ENCODE measurements at regions of chr18 and their contacts with region 1.

Region 1: DNA sequence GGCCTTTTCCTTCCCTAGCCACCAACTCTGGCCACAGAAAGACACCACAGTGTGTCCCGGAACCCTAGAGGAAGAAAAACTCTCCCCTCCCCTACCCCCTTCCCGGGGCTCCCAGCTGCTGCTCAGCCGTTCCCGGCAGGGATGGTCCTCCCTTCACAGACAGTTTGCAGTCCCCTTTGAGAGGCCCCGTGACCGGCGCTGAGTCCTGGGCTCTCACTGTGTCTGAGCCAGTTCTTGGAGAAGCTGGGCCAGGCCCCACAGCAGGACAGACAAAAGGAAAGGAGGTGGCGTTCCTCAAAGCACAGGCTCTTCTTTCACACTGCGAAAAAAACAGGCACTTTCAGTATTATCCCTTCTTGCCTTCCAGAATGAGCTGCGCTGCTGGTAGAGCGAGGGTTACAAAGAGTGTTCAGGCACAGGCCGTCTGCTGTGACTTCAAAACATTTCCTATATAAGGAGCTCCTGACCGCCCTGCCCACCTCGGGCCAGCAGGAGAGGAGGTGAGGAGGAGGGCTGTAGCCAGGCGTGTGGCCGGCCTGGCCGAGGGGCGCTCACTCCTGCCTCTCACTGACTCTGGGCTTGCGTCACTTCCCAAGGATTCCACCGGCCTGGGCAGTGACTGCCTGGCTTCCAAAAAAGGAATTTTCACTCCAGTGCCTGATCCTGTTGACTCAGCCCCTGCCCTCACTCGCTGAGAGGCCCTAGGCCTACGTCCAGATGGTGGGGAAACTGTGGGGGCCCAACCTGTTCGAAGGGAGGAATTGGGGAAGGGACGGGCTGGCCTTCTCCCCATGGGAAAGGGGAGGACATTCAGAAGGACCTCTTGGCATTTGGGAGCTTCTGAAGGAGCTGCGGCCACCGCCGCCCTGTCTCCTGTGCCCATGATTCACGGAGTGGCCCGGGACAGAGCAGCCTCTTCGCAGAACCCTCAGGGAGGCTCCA is 24.9 kb downstream of the CIDEA start:
- DNase-seq: peak; percentile 93
- H3K4me3 ChIP-seq: peak overlapping the region; percentile 9 to 44 (median 30)
- H3K27ac ChIP-seq: peak overlapping the region; percentile 89
- H3K4me1 ChIP-seq: peaks cover 34% of the 10 kb centered on the region
- H3K27me3 ChIP-seq: no peaks in the 10 kb centered on the region
- CTCF ChIP-seq: peak in 1 of 2 donors; percentile 23
- POLR2A ChIP-seq: peak; percentile 86

Region 2: DNA sequence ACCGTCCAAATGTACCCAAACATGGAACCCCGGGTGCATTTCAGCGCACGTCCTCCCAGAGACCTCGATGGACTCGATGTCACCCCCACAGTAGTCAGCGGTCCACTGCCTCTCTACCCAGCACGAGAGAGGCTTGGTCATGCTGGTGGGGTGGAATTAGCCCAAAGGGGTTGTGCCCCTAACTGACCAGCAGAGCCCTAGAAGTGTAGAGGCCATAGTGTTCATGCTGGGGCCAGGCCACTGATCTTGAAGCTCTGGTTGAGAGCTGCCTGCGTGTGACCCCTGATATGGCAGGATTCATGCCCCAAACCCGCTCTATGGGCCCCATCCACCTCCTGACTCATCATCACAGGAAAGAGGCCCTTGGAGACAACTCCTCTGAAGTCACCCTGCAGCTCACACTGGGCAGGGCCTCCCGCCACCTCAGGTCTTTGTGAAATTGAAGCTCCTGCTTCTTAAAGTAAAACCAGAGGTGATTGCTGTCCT is 16.9 kb after region 1 on chr18:
- CTCF ChIA-PET with region 1: interaction called, 33 read pairs
- POLR2A ChIA-PET with region 1: interaction called, 12 read pairs
- dilution Hi-C with region 1: no loop called
- intact Hi-C with region 1: loop called (anchors 1 kb)
- DNase-seq: no peak
- H3K4me3 ChIP-seq: no peak overlapping the region
- H3K27ac ChIP-seq: peak overlapping the region; percentile 85
- H3K4me1 ChIP-seq: peaks cover 14% of the 10 kb centered on the region
- H3K27me3 ChIP-seq: no peaks in the 10 kb centered on the region
- CTCF ChIP-seq: no peak
- POLR2A ChIP-seq: peak; percentile 42

Region 3: GRCh38 chr18:12376718-12377555 is 97.9 kb after region 1 on chr18 and contains the start of gene AFG3L2:
- CTCF ChIA-PET with region 1: no interaction called
- POLR2A ChIA-PET with region 1: no interaction called
- dilution Hi-C with region 1: no loop called
- intact Hi-C with region 1: loop called (anchors 1 kb)
- DNase-seq: peak; percentile 100
- H3K4me3 ChIP-seq: peak within 1 kb of the TSS; percentile 62 to 85 (median 72)
- H3K27ac ChIP-seq: peak within 1 kb of the TSS; percentile 89
- H3K4me1 ChIP-seq: peaks cover 9% of the 10 kb centered on the region
- H3K27me3 ChIP-seq: no peaks in the 10 kb centered on the region
- CTCF ChIP-seq: no peak
- POLR2A ChIP-seq: peak; percentile 93
- total RNA-seq, gene AFG3L2: 40.6 and 42.4 TPM in 2 replicates

Region 4: GRCh38 chr18:12883684-12884405 is 604.8 kb after region 1 on chr18 and contains the start of gene PTPN2:
- CTCF ChIA-PET with region 1: no interaction called
- POLR2A ChIA-PET with region 1: no interaction called
- dilution Hi-C with region 1: no loop called
- intact Hi-C with region 1: no loop called
- DNase-seq: peak; percentile 95
- H3K4me3 ChIP-seq: peak within 1 kb of the TSS; percentile 72 to 92 (median 74)
- H3K27ac ChIP-seq: peak within 1 kb of the TSS; percentile 97
- H3K4me1 ChIP-seq: peaks cover 6% of the 10 kb centered on the region
- H3K27me3 ChIP-seq: no peaks in the 10 kb centered on the region
- CTCF ChIP-seq: no peak
- POLR2A ChIP-seq: peak; percentile 96
- total RNA-seq, gene PTPN2: 20.9 and 21.7 TPM in 2 replicates

Measured in endothelial cell of umbilical vein (primary cell).